Sigmoid colon (tissue), 7 donors: ENCODE measurements at regions of chr1 and their contacts with region 1.

Region 1: GRCh38 chr1:149886396-149887195 is 12.8 kb upstream of the BOLA1 start:
- DNase-seq: peak; percentile 97
- H3K4me3 ChIP-seq: peak overlapping the region; percentile 72 to 79 (median 76)
- H3K27ac ChIP-seq: peak overlapping the region; percentile 97 to 100 (median 99)
- H3K4me1 ChIP-seq: peaks cover 3 to 32% (median 21%) of the 10 kb centered on the region in 4 donors
- H3K27me3 ChIP-seq: no peaks in the 10 kb centered on the region
- CTCF ChIP-seq: no peak
- EP300 ChIP-seq: peak in 2 of 4 donors; percentile 35 to 64
- POLR2A ChIP-seq: peak; percentile 99 to 100

Region 2: GRCh38 chr1:149927503-149928387 is 41.1 kb after region 1 on chr1 and contains the start of gene SF3B4:
- intact Hi-C with region 1: loop called (anchors 2 kb)
- DNase-seq: peak; percentile 98
- H3K4me3 ChIP-seq: peak within 1 kb of the TSS; percentile 74 to 94 (median 92)
- H3K27ac ChIP-seq: peak within 1 kb of the TSS; percentile 95 to 97 (median 96)
- H3K4me1 ChIP-seq: peaks cover 0 to 39% (median 34%) of the 10 kb centered on the region in 4 donors
- H3K27me3 ChIP-seq: no peaks in the 10 kb centered on the region
- CTCF ChIP-seq: no peak
- EP300 ChIP-seq: peak in 1 of 4 donors; percentile 3
- POLR2A ChIP-seq: peak; percentile 94 to 96
- total RNA-seq, gene SF3B4: 7.8 to 17.7 (median 10.4) TPM

Region 3: GRCh38 chr1:149997585-149998262 is 111.1 kb after region 1 on chr1:
- intact Hi-C with region 1: no loop called
- DNase-seq: no peak
- H3K4me3 ChIP-seq: no peak overlapping the region
- H3K27ac ChIP-seq: no peak overlapping the region
- H3K4me1 ChIP-seq: peaks cover 0 to 86% (median 62%) of the 10 kb centered on the region in 4 donors
- H3K27me3 ChIP-seq: no peaks in the 10 kb centered on the region
- CTCF ChIP-seq: no peak
- EP300 ChIP-seq: no peak
- POLR2A ChIP-seq: no peak

Region 4: DNA sequence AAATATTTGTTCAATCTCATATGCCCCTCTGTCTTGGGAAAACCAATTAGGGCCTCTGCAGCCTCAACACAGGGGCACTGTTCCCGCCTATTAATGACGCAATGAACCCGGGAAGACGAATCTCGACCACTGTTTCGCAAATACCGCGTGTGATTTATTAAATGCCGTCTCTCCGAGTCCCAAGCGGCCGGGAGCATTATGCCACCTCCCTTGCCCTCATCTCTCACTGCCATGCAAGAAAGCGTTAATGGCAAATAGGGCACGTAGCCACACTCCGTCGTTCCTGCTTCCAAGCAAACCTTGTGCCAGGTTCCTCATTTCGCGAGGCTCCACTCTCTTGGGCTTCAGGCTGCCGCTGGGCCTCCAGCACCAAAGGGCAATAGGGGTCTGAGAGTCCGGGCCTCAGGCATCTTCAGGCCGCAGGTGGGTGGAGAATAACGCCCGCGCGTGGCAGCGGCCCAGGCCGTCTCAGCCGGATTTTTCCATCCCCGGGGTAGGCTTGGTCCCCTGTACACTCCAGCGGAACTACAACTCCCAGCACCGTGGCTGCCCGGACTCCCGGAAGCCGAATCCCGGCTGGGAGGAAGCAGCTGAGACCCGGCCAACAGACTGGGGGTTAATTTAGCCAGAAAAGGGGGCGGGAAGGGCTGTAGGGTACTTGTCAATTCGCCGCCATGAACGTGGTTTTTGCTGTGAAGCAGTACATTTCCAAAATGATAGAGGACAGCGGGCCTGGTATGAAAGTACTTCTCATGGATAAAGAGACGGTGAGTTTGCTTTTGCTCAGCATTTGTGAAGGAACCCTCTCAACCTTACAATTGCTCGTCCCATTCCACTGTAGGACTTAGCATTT is 180.8 kb after region 1 on chr1 and contains the start of gene VPS45:
- intact Hi-C with region 1: loop called (anchors 10 kb)
- DNase-seq: peak; percentile 96
- H3K4me3 ChIP-seq: peak within 1 kb of the TSS; percentile 64 to 84 (median 71)
- H3K27ac ChIP-seq: peak within 1 kb of the TSS; percentile 97 to 99 (median 98)
- H3K4me1 ChIP-seq: peaks cover 0 to 37% (median 25%) of the 10 kb centered on the region in 4 donors
- H3K27me3 ChIP-seq: no peaks in the 10 kb centered on the region
- CTCF ChIP-seq: peak in 1 of 4 experiments; percentile 37
- EP300 ChIP-seq: peak in 1 of 4 donors; percentile 40
- POLR2A ChIP-seq: peak; percentile 30 to 44
- total RNA-seq, gene VPS45: 44.6 to 68.1 (median 56.0) TPM